Naive thymus-derived CD4-positive, alpha-beta T cell (primary cell): ENCODE measurements at regions of chr11 and their contacts with region 1.

Region 1: GRCh38 chr11:47373876-47374720 is 4.2 kb downstream of the SPI1 start:
- DNase-seq: peak; percentile 69 to 91 (median 82)
- ATAC-seq: peak; percentile 84
- H3K4me3 ChIP-seq: no peak overlapping the region
- H3K4me3 Mint-ChIP-seq: peak overlapping the region in 1 of 10 donors; percentile 51
- H3K27ac ChIP-seq: no peak overlapping the region
- H3K27ac Mint-ChIP-seq: peak overlapping the region in 3 of 9 donors; percentile 48 to 72 (median 65)
- H3K4me1 ChIP-seq: peaks cover 0 to 3% of the 10 kb centered on the region in 2 donors
- H3K4me1 Mint-ChIP-seq: peaks cover 5 to 18% (median 9%) of the 10 kb centered on the region in 7 donors
- H3K27me3 ChIP-seq: no peaks in the 10 kb centered on the region
- H3K27me3 Mint-ChIP-seq: no peaks in the 10 kb centered on the region

Region 2: GRCh38 chr11:47387911-47388678 is 14.0 kb after region 1 on chr11:
- CTCF ChIA-PET with region 1: interaction called, 33 read pairs
- POLR2A ChIA-PET with region 1: interaction called, 15 read pairs
- intact Hi-C with region 1: no loop called
- DNase-seq: no peak
- ATAC-seq: peak; percentile 35
- H3K4me3 ChIP-seq: no peak overlapping the region
- H3K4me3 Mint-ChIP-seq: no peak overlapping the region
- H3K27ac ChIP-seq: no peak overlapping the region
- H3K27ac Mint-ChIP-seq: peak overlapping the region in 3 of 9 donors; percentile 19 to 65 (median 22)
- H3K4me1 ChIP-seq: peaks cover 8 to 11% of the 10 kb centered on the region in 2 donors
- H3K4me1 Mint-ChIP-seq: peaks cover 11 to 33% (median 24%) of the 10 kb centered on the region in 7 donors
- H3K27me3 ChIP-seq: no peaks in the 10 kb centered on the region
- H3K27me3 Mint-ChIP-seq: no peaks in the 10 kb centered on the region

Region 3: GRCh38 chr11:47394322-47395222 is 20.5 kb after region 1 on chr11:
- CTCF ChIA-PET with region 1: interaction called, 33 read pairs
- POLR2A ChIA-PET with region 1: interaction called, 24 read pairs
- intact Hi-C with region 1: loop called in 1 of 2 experiments (anchors 1 kb)
- DNase-seq: peak in 6 of 9 donors; percentile 32 to 61 (median 46)
- ATAC-seq: peak; percentile 67
- H3K4me3 ChIP-seq: peak overlapping the region; percentile 70
- H3K4me3 Mint-ChIP-seq: peak overlapping the region; percentile 52 to 77 (median 72)
- H3K27ac ChIP-seq: peak overlapping the region; percentile 81
- H3K27ac Mint-ChIP-seq: peak overlapping the region; percentile 85 to 96 (median 92)
- H3K4me1 ChIP-seq: peaks cover 26 to 41% of the 10 kb centered on the region in 2 donors
- H3K4me1 Mint-ChIP-seq: peaks cover 16 to 65% (median 54%) of the 10 kb centered on the region in 7 donors
- H3K27me3 ChIP-seq: no peaks in the 10 kb centered on the region
- H3K27me3 Mint-ChIP-seq: no peaks in the 10 kb centered on the region

Region 4: GRCh38 chr11:47399860-47400767 is 26.0 kb after region 1 on chr11:
- CTCF ChIA-PET with region 1: interaction called, 33 read pairs
- POLR2A ChIA-PET with region 1: interaction called, 24 read pairs
- intact Hi-C with region 1: no loop called
- DNase-seq: peak in 7 of 9 donors; percentile 44 to 55 (median 49)
- ATAC-seq: peak; percentile 85
- H3K4me3 ChIP-seq: peak overlapping the region; percentile 78
- H3K4me3 Mint-ChIP-seq: peak overlapping the region; percentile 82 to 94 (median 90)
- H3K27ac ChIP-seq: peak overlapping the region; percentile 82
- H3K27ac Mint-ChIP-seq: peak overlapping the region; percentile 78 to 97 (median 91)
- H3K4me1 ChIP-seq: peaks cover 8 to 18% of the 10 kb centered on the region in 2 donors
- H3K4me1 Mint-ChIP-seq: peaks cover 12 to 44% (median 31%) of the 10 kb centered on the region in 7 donors
- H3K27me3 ChIP-seq: no peaks in the 10 kb centered on the region
- H3K27me3 Mint-ChIP-seq: no peaks in the 10 kb centered on the region

Region 5: GRCh38 chr11:47461876-47462275 is 87.8 kb after region 1 on chr11:
- CTCF ChIA-PET with region 1: no interaction called
- POLR2A ChIA-PET with region 1: no interaction called
- intact Hi-C with region 1: no loop called
- DNase-seq: no peak
- ATAC-seq: no peak
- H3K4me3 ChIP-seq: no peak overlapping the region
- H3K4me3 Mint-ChIP-seq: no peak overlapping the region
- H3K27ac ChIP-seq: no peak overlapping the region
- H3K27ac Mint-ChIP-seq: peak overlapping the region in 5 of 9 donors; percentile 17 to 87 (median 67)
- H3K4me1 ChIP-seq: no peaks in the 10 kb centered on the region
- H3K4me1 Mint-ChIP-seq: peaks cover 0 to 1% (median 0%) of the 10 kb centered on the region in 7 donors
- H3K27me3 ChIP-seq: no peaks in the 10 kb centered on the region
- H3K27me3 Mint-ChIP-seq: no peaks in the 10 kb centered on the region